ENCODE measurements at regions of chr11 and their contacts with region 1.

Region 1: DNA sequence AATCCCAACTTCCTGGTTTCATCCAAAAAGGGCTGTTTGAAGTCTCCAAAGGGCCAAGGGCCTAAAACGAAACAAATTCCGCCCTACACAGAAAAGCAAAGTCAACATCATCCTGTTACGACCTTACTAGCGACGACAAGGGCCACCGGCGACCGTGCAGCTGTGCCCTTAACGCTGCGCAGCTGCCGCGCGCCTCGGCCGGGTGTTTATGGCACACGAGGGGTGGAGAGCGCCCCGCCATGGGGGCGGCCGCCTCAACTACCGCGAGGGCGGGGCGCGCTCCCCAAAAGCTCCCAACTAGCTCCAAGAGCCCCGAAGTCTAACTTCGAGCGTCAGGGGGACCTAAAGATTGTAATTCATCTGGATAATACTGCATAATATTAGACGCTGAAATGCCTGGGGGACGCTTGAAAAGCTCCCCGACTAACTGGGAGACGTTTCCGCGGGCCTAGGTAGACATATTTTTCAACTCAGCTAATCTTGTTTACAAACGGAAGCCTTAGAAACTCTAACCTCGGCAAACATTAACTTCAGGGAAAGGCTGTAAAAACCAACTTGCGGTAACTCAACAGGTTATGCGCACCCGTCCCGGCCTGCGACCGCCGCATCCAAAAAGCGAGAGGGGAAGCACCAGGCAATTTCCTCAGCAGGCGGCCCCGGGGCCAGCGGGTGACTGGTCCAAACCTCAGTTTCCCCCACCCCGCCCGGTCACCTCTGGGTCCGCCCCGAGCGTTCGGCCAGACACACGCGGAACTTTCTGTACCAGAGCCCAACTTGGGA is 694 bp downstream of the TMEM123 start:
- DNase-seq: peak; percentile 94
- H3K4me3 Mint-ChIP-seq: peak overlapping the region; percentile 95
- H3K27ac Mint-ChIP-seq: peak overlapping the region; percentile 99
- H3K4me1 Mint-ChIP-seq: peaks cover 70% of the 10 kb centered on the region
- H3K27me3 Mint-ChIP-seq: no peaks in the 10 kb centered on the region

Region 2: DNA sequence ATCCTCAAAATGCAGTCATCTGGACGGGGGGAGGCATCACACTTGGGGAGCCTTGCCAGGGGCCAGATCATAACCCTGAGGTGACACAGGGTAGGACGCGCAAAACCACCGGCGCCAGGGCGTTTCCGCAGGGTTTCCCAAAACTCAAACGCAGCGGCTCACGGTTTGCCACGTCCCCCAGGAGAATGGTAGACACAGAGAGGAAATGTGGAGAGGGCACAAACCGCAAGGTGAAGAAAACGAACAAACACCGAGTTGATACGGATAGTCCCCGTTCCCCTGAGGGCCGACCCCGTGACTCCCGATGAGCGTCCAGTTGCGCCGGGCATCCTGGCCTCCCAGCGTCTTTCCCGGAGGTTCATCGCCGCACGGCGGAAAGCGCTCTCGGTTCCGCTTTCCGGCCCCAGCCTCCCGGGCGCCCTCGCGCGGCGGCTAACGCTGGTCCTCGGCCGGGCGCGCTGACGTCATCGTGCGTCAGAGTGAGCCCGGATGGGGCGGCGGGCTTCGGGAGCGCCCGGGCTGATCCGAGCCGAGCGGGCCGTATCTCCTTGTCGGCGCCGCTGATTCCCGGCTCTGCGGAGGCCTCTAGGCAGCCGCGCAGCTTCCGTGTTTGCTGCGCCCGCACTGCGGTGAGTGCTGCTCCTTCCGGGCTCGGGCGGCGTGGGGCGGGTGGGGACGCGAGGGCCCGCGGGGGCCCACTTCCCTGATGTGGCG is 105.0 kb before region 1 on chr11 and contains the start of gene BIRC2:
- intact Hi-C with region 1: loop called (anchors 1 kb)
- DNase-seq: peak; percentile 99
- H3K4me3 Mint-ChIP-seq: peak within 1 kb of the TSS; percentile 99
- H3K27ac Mint-ChIP-seq: peak within 1 kb of the TSS; percentile 99
- H3K4me1 Mint-ChIP-seq: peaks cover 36% of the 10 kb centered on the region
- H3K27me3 Mint-ChIP-seq: no peaks in the 10 kb centered on the region
- total RNA-seq, gene BIRC2: 27.8 and 30.8 TPM in 2 replicates

Region 3: GRCh38 chr11:102416976-102417375 is 34.9 kb before region 1 on chr11:
- intact Hi-C with region 1: loop called (anchors 1 kb)
- DNase-seq: no peak
- H3K4me3 Mint-ChIP-seq: peak overlapping the region; percentile 53
- H3K27ac Mint-ChIP-seq: peak overlapping the region; percentile 80
- H3K4me1 Mint-ChIP-seq: peaks cover 73% of the 10 kb centered on the region
- H3K27me3 Mint-ChIP-seq: no peaks in the 10 kb centered on the region

Region 4: DNA sequence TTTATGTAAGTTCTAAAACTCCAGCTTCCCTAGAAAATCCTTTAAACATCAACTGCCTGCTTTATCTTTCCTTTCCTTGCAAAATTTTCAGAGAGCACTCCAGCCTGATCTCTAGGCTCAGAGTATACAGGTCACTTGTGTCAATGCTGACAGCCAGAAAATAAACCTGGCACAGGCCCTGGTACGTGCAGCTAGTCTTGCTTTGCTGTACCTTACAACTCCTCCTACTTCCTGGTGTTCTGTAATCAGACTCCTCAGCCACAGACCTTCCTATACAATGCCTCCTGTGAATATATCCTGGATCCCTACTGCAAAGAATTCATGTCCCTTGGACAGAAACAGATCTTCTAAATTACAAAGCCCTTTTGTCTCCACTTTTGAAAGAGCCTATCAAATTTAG is 24.9 kb after region 1 on chr11:
- intact Hi-C with region 1: loop called (anchors 1 kb)
- DNase-seq: peak; percentile 79
- H3K4me3 Mint-ChIP-seq: peak overlapping the region; percentile 52
- H3K27ac Mint-ChIP-seq: peak overlapping the region; percentile 83
- H3K4me1 Mint-ChIP-seq: peaks cover 55% of the 10 kb centered on the region
- H3K27me3 Mint-ChIP-seq: no peaks in the 10 kb centered on the region

Region 5: DNA sequence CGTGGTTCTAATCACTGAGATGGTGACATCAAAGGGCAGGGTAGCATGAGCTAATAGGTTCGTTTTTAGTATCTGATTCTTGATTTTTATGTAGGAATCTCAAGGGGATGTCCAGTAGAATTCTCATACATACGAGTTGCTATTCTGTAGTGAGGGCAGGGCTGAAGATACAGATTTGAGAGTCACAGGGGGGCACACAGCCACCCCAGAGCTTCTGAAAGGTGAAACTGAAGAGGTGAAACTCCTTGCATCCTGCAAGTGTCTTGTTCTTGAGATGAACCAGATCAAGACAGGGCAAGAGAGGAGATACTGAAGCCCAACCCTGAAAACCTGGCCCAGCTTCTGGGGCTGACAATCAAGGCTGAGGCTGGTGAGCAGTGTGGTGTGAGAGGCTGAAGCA is 36.3 kb after region 1 on chr11:
- intact Hi-C with region 1: no loop called
- DNase-seq: no peak
- H3K4me3 Mint-ChIP-seq: no peak overlapping the region
- H3K27ac Mint-ChIP-seq: peak overlapping the region; percentile 6
- H3K4me1 Mint-ChIP-seq: peaks cover 53% of the 10 kb centered on the region
- H3K27me3 Mint-ChIP-seq: peaks cover 2% of the 10 kb centered on the region

Region 6: DNA sequence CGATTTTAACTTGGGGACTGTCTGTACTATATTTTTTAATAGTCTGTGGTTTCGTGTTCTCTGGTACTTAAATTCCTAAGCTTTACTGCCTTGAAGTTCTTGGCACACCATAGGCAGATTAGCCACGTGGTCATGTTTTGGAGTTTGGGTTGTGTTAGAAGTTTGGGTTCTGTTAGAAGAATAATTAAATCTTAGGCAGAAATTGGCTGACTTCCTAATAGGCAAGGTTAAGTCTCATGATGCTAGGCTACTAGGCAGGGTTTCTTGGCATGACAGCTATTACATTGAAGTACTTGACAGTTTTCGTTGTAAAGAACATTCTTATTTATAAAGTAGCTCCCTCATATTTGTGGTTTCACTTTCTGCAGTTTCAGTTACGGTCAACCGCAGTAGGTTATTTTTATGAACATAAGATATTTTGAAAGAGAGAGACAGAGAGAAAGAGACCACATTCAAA is 108.7 kb after region 1 on chr11:
- intact Hi-C with region 1: loop called (anchors 5 kb)
- DNase-seq: peak; percentile 73
- H3K4me3 Mint-ChIP-seq: peak overlapping the region; percentile 52
- H3K27ac Mint-ChIP-seq: peak overlapping the region; percentile 78
- H3K4me1 Mint-ChIP-seq: peaks cover 39% of the 10 kb centered on the region
- H3K27me3 Mint-ChIP-seq: peaks cover 2% of the 10 kb centered on the region

Region 7: GRCh38 chr11:102611291-102611690 is 159.4 kb after region 1 on chr11:
- intact Hi-C with region 1: no loop called
- DNase-seq: no peak
- H3K4me3 Mint-ChIP-seq: no peak overlapping the region
- H3K27ac Mint-ChIP-seq: no peak overlapping the region
- H3K4me1 Mint-ChIP-seq: peaks cover 15% of the 10 kb centered on the region
- H3K27me3 Mint-ChIP-seq: peaks cover 9% of the 10 kb centered on the region

Region 8: GRCh38 chr11:102630598-102631448 is 179.0 kb after region 1 on chr11:
- intact Hi-C with region 1: no loop called
- DNase-seq: no peak
- H3K4me3 Mint-ChIP-seq: no peak overlapping the region
- H3K27ac Mint-ChIP-seq: no peak overlapping the region
- H3K4me1 Mint-ChIP-seq: no peaks in the 10 kb centered on the region
- H3K27me3 Mint-ChIP-seq: peaks cover 31% of the 10 kb centered on the region